RWPE1 (cell line): ENCODE measurements at regions of chr5 and their contacts with region 1.

Region 1: DNA sequence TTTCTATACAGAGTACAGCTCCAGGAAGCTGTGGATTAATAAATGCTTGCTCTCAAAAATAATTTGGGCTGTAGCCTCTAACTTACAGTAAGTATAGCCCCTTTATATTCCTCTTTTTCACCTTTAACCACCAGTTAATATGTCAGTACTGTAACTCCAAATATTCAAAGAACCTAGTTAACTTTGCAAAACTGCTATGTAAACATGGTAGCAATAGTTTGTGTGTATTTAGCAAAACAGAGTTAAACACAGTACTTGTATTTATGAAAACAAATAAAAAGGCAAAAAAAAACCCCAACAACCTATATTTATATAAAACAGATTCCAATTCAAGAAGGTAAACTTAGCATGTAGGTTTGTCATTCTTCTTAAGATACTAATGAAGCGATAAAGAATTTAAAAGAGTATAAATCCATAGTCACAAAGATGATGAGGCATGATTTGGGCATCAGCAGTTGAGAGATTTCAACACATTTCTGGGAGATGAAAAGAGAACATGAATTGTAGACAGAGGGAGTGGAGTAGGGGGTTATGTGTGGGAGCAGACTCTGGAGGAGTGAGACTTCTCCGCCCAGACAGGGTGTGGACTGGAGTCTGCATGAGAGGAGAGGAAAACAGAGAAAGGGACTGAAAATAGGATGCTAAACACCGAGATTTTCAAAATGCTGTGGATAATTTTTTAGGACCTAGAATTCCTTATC is 47.0 kb upstream of the F2RL1 start:
- DNase-seq: no peak
- H3K27ac ChIP-seq: no peak overlapping the region
- CTCF ChIP-seq: no peak

Region 2: GRCh38 chr5:76479973-76480667 is 291.7 kb before region 1 on chr5:
- CTCF ChIA-PET with region 1: no interaction called
- POLR2A ChIA-PET with region 1: no interaction called
- DNase-seq: no peak
- H3K27ac ChIP-seq: no peak overlapping the region
- CTCF ChIP-seq: no peak

Region 3: GRCh38 chr5:76537073-76537543 is 234.7 kb before region 1 on chr5:
- CTCF ChIA-PET with region 1: no interaction called
- POLR2A ChIA-PET with region 1: no interaction called
- DNase-seq: no peak
- H3K27ac ChIP-seq: no peak overlapping the region
- CTCF ChIP-seq: no peak

Region 4: DNA sequence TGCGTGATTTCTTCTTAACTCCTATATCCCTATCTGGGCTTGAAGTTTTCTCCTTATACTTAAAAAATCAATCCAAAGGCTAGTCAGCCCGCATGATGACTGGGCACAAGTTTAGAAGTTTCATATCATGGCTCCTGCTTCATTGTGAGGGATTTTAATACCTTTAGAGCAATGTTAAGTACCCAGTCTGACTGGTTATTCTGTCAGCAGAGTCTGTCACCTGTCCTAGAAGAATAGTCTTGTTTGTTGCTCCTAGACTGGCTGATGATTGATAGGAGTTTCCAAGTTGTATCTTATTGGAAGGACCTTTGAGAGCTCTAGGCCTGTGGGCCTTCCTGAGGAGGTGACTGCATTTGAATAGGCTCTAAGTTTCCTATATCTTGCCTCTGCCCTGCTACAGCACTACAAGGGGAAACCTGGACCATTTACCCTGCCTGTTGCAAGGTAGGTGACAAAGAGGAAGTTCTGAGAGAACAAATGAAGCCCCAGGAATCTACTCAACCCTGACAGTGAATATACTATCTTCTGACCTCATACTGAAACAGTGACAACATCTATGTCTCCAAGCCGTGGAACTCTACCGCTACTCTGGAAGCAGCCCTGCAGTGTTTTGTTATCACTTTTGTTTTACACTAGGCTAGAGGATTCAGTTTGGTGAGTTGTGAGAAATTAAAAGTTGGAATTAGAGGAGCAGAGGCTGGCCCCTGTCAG is 215.2 kb before region 1 on chr5:
- CTCF ChIA-PET with region 1: interaction called, 10 read pairs
- POLR2A ChIA-PET with region 1: no interaction called
- DNase-seq: no peak
- H3K27ac ChIP-seq: no peak overlapping the region
- CTCF ChIP-seq: no peak

Region 5: GRCh38 chr5:76601470-76601869 is 170.4 kb before region 1 on chr5:
- CTCF ChIA-PET with region 1: interaction called, 95 read pairs
- POLR2A ChIA-PET with region 1: no interaction called
- DNase-seq: peak; percentile 80
- H3K27ac ChIP-seq: no peak overlapping the region
- CTCF ChIP-seq: peak; percentile 78

Region 6: GRCh38 chr5:76608833-76609232 is 163.0 kb before region 1 on chr5:
- CTCF ChIA-PET with region 1: interaction called, 15 read pairs
- POLR2A ChIA-PET with region 1: no interaction called
- DNase-seq: no peak
- H3K27ac ChIP-seq: no peak overlapping the region
- CTCF ChIP-seq: no peak

Region 7: DNA sequence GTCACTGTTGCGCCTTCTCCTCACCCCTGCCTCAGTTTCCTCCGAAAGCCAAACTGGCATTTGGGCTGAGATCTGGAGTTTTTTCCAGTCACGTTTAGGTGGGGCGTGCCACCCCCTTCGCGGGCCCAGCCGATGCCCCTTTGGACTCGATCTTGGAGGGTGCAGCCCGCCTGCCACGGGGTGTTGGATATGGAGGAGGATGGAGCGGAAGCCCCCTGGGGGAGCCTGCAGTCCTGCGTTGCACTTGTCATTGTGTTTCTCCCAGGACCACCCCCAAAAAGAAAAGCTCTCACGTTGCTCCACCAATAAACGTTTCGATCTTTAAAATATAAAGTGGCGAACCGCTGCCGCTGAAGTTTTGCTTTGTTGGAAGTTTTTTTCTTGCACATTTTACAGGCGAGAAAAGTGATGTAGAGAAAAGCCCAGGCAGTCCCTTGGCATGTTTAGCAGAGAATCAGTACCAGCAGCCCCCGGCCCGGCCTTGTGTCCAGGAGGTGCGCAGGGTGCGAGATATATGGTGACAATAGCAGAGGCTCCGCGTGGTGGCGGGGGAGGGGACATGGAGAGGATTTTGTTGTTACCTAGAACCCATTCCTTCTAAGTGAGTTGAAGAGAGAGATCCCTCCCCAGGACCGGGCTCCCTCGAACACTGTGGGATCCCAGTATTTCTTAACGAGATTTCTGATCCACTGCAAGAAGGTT is 55.2 kb before region 1 on chr5:
- CTCF ChIA-PET with region 1: interaction called, 11 read pairs
- POLR2A ChIA-PET with region 1: interaction called, 3 read pairs
- DNase-seq: peak; percentile 30
- H3K27ac ChIP-seq: peak overlapping the region; percentile 83
- CTCF ChIP-seq: no peak

Region 8: DNA sequence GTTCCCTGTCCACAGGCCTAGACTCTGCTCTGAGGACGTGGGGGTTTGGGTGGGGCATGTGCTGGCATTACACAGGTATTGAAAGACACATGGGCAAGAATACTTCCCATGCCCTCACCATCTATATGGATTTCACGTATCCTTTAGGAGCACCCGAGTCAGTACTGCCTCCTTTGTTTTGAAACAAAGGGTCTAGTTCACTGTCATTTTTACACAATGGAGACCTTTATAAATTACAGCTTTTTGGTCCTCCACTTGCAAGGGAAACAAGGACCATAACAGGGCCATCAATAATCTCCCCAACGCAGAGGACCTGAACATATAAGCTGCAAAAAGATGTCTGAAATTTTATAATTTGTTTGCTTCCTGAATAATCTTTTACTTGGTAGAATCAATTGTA is 156.1 kb after region 1 on chr5:
- CTCF ChIA-PET with region 1: no interaction called
- POLR2A ChIA-PET with region 1: no interaction called
- DNase-seq: no peak
- H3K27ac ChIP-seq: no peak overlapping the region
- CTCF ChIP-seq: no peak